Calu3 (cell line): ENCODE measurements at regions of chr11 and their contacts with region 1.

Region 1: GRCh38 chr11:67353317-67354074 is at the start of gene POLD4:
- DNase-seq: peak; percentile 98
- H3K4me3 Mint-ChIP-seq: peak within 1 kb of the TSS; percentile 87
- H3K27ac Mint-ChIP-seq: peak within 1 kb of the TSS; percentile 89
- H3K4me1 Mint-ChIP-seq: peaks cover 63% of the 10 kb centered on the region
- H3K27me3 Mint-ChIP-seq: no peaks in the 10 kb centered on the region
- CTCF ChIP-seq: no peak
- total RNA-seq, gene POLD4: 95.1 and 119 TPM in 2 replicates

Region 2: GRCh38 chr11:67373925-67374618 is 20.6 kb after region 1 on chr11:
- CTCF ChIA-PET with region 1: interaction called, 33 read pairs
- intact Hi-C with region 1: loop called (anchors 1 kb)
- DNase-seq: peak; percentile 96
- H3K4me3 Mint-ChIP-seq: peak overlapping the region; percentile 71
- H3K27ac Mint-ChIP-seq: peak overlapping the region; percentile 75
- H3K4me1 Mint-ChIP-seq: peaks cover 47% of the 10 kb centered on the region
- H3K27me3 Mint-ChIP-seq: no peaks in the 10 kb centered on the region
- CTCF ChIP-seq: peak; percentile 56

Region 3: DNA sequence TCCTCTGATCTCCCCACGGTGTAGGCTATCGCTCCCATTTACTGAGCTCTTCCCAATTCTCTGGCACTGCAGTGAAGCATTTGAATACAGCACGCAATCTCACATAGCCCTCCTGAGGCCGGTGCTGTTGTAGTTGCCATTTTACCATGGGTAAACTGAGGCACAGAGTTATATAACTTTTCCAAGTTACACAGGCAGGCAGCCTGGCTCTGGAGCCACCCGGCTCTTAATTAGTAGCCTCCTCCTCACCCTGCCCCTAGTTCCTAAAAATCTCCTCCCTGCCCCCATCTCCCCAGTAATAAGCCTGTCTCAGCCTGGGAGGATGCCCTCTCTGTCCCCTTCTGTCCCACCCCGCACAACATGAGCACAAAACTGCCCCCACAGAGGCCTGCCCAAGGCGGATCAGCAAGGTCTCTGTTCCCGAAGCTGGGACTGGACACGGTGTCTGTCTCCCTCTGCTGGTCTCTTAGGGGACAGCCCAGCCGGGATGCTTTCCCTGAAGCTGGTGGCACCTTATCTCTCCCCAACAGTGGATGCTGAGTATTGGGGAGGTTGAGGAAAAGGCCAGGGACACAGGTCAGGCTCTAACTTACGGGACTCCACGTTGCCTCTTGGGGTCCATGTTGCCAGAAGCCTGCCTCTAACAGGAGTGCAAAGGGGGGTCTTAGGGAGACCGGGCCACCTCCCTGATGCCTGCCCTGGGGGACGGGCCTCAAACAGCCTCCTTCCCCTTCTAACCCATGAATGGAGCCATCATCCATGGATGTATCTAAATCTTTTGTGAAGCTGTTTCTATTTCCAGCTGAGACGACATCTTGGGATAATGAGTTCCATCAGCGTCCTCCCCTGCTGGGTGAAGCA is 29.0 kb after region 1 on chr11:
- CTCF ChIA-PET with region 1: interaction called, 36 read pairs
- intact Hi-C with region 1: loop called (anchors 5 kb)
- DNase-seq: peak; percentile 88
- H3K4me3 Mint-ChIP-seq: no peak overlapping the region
- H3K27ac Mint-ChIP-seq: peak overlapping the region; percentile 2
- H3K4me1 Mint-ChIP-seq: peaks cover 59% of the 10 kb centered on the region
- H3K27me3 Mint-ChIP-seq: no peaks in the 10 kb centered on the region
- CTCF ChIP-seq: peak; percentile 94

Region 4: GRCh38 chr11:67391304-67392132 is 38.0 kb after region 1 on chr11 and contains the start of gene RAD9A:
- CTCF ChIA-PET with region 1: interaction called, 9 read pairs
- intact Hi-C with region 1: loop called (anchors 5 kb)
- DNase-seq: peak; percentile 94
- H3K4me3 Mint-ChIP-seq: peak within 1 kb of the TSS; percentile 91
- H3K27ac Mint-ChIP-seq: peak within 1 kb of the TSS; percentile 73
- H3K4me1 Mint-ChIP-seq: peaks cover 31% of the 10 kb centered on the region
- H3K27me3 Mint-ChIP-seq: no peaks in the 10 kb centered on the region
- CTCF ChIP-seq: no peak
- total RNA-seq, gene RAD9A: 26.9 and 38.6 TPM in 2 replicates

Region 5: GRCh38 chr11:67401495-67402191 is 48.1 kb after region 1 on chr11 and contains the start of gene PPP1CA:
- CTCF ChIA-PET with region 1: interaction called, 12 read pairs
- intact Hi-C with region 1: no loop called
- DNase-seq: peak; percentile 93
- H3K4me3 Mint-ChIP-seq: peak within 1 kb of the TSS; percentile 69
- H3K27ac Mint-ChIP-seq: no peak within 1 kb of the TSS
- H3K4me1 Mint-ChIP-seq: no peaks in the 10 kb centered on the region
- H3K27me3 Mint-ChIP-seq: no peaks in the 10 kb centered on the region
- CTCF ChIP-seq: peak; percentile 53
- total RNA-seq, gene PPP1CA: 179 and 180 TPM in 2 replicates

Region 6: DNA sequence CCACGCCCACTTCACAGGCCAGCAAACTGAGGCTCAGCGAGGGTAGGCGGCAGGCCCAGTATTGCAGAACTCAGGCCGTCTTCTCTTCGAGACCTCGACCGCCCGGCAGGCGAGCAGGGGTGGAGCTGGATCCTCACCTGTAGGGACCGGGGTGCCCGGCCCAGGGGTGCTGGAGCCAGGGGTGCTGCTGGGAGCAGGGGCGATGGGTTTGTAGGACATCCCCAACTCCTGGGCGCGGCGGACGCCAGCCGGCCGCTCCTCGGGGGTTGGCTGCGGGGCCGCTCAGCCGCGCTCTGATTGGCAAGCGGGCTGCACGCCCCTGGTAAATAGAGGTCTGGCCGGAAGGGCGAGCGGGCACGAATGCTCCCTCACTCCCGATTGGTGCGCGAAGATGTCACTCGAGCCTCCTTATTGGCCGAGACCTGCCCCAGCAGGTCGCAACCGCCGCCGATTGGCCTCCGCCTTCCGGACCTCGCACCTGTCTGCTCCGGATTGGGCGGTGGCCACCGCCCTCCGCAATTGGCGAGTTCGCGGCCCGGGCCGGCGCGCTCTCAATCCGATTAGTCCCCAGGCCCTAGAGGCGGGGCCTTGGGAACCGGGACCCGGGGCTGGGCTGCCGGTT is 154.5 kb after region 1 on chr11 and contains the start of gene CDK2AP2:
- CTCF ChIA-PET with region 1: interaction called, 3 read pairs
- intact Hi-C with region 1: loop called (anchors 10 kb)
- DNase-seq: peak; percentile 99
- H3K4me3 Mint-ChIP-seq: peak within 1 kb of the TSS; percentile 91
- H3K27ac Mint-ChIP-seq: peak within 1 kb of the TSS; percentile 99
- H3K4me1 Mint-ChIP-seq: peaks cover 31% of the 10 kb centered on the region
- H3K27me3 Mint-ChIP-seq: peaks cover 13% of the 10 kb centered on the region
- CTCF ChIP-seq: no peak
- total RNA-seq, gene CDK2AP2: 59.7 and 64.7 TPM in 2 replicates